Dendritic cell treated with granulocyte-macrophage colony-stimulating factor and Interleukin-4, amounts not matched to agents 40 ng/mL and 50 ng/mL, for 4 days (primary cell): ENCODE measurements at regions of chr11 and their contacts with region 1.

Region 1: GRCh38 chr11:75717608-75718418 is at the start of gene MOGAT2:
- H3K4me3 Mint-ChIP-seq: no peak within 1 kb of the TSS
- H3K27ac Mint-ChIP-seq: no peak within 1 kb of the TSS
- H3K4me1 Mint-ChIP-seq: peaks cover 15% of the 10 kb centered on the region
- H3K27me3 Mint-ChIP-seq: peaks cover 24% of the 10 kb centered on the region

Region 2: GRCh38 chr11:75802913-75803820 is 85.4 kb after region 1 on chr11:
- intact Hi-C with region 1: loop called (anchors 10 kb)
- H3K4me3 Mint-ChIP-seq: no peak overlapping the region
- H3K27ac Mint-ChIP-seq: peak overlapping the region; percentile 86
- H3K4me1 Mint-ChIP-seq: peaks cover 41% of the 10 kb centered on the region
- H3K27me3 Mint-ChIP-seq: no peaks in the 10 kb centered on the region

Region 3: GRCh38 chr11:75867775-75868374 is 150.1 kb after region 1 on chr11:
- intact Hi-C with region 1: loop called (anchors 2 kb)
- H3K4me3 Mint-ChIP-seq: no peak overlapping the region
- H3K27ac Mint-ChIP-seq: peak overlapping the region; percentile 11
- H3K4me1 Mint-ChIP-seq: peaks cover 56% of the 10 kb centered on the region
- H3K27me3 Mint-ChIP-seq: no peaks in the 10 kb centered on the region

Region 4: GRCh38 chr11:76152086-76152681 is 434.4 kb after region 1 on chr11:
- intact Hi-C with region 1: loop called (anchors 10 kb)
- H3K4me3 Mint-ChIP-seq: peak overlapping the region; percentile 78
- H3K27ac Mint-ChIP-seq: peak overlapping the region; percentile 56
- H3K4me1 Mint-ChIP-seq: peaks cover 25% of the 10 kb centered on the region
- H3K27me3 Mint-ChIP-seq: peaks cover 30% of the 10 kb centered on the region

Region 5: GRCh38 chr11:76329084-76329984 is 611.5 kb after region 1 on chr11:
- intact Hi-C with region 1: loop called (anchors 10 kb)
- H3K4me3 Mint-ChIP-seq: no peak overlapping the region
- H3K27ac Mint-ChIP-seq: peak overlapping the region; percentile 10
- H3K4me1 Mint-ChIP-seq: peaks cover 50% of the 10 kb centered on the region
- H3K27me3 Mint-ChIP-seq: peaks cover 4% of the 10 kb centered on the region